Stomach (tissue), 19 donors: ENCODE measurements at regions of chr3 and their contacts with region 1.

Region 1: DNA sequence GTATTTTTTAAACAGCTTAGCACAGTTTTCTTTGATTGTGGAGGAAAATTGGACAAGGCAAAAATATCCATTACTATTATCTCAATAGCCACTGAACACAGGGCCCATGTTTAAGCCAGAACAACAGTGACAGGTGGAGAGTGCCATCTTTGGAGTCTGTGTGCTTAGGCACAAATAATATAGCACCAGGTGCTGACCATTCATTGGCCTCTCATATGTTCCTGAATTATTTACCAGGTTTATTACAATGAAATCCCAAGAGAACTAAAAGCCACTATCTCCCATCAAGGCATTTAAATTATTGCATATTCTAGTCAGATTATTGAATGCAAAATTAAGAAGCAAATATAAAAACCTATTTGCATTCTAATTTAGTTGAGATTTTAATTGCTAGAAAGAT is 39.6 kb downstream of the GPR156 start:
- DNase-seq: no peak
- H3K4me3 ChIP-seq: no peak overlapping the region
- H3K27ac ChIP-seq: no peak overlapping the region
- H3K4me1 ChIP-seq: no peaks in the 10 kb centered on the region
- H3K27me3 ChIP-seq: no peaks in the 10 kb centered on the region
- CTCF ChIP-seq: no peak
- EP300 ChIP-seq: no peak
- POLR2A ChIP-seq: no peak

Region 2: GRCh38 chr3:120420928-120421551 is 175.7 kb after region 1 on chr3:
- intact Hi-C with region 1: loop called (anchors 5 kb)
- DNase-seq: peak in 1 of 2 donors; percentile 85
- H3K4me3 ChIP-seq: no peak overlapping the region
- H3K27ac ChIP-seq: peak overlapping the region in 4 of 5 donors; percentile 60 to 83 (median 64)
- H3K4me1 ChIP-seq: peaks cover 18 to 87% (median 50%) of the 10 kb centered on the region in 4 donors
- H3K27me3 ChIP-seq: no peaks in the 10 kb centered on the region
- CTCF ChIP-seq: peak in 1 of 7 experiments; percentile 7
- EP300 ChIP-seq: peak; percentile 89
- POLR2A ChIP-seq: no peak